ENCODE measurements at regions of chr4 and their contacts with region 1.

Region 1: GRCh38 chr4:183407128-183407585 is 37.3 kb upstream of the CDKN2AIP start:
- DNase-seq: peak; percentile 94
- H3K4me3 Mint-ChIP-seq: peak overlapping the region; percentile 66
- H3K27ac Mint-ChIP-seq: peak overlapping the region; percentile 59
- H3K4me1 Mint-ChIP-seq: peaks cover 13% of the 10 kb centered on the region
- H3K27me3 Mint-ChIP-seq: no peaks in the 10 kb centered on the region

Region 2: GRCh38 chr4:183074296-183074990 is 332.7 kb before region 1 on chr4:
- CTCF ChIA-PET with region 1: interaction called, 4 read pairs
- POLR2A ChIA-PET with region 1: no interaction called
- intact Hi-C with region 1: loop called (anchors 2 kb)
- DNase-seq: no peak
- H3K4me3 Mint-ChIP-seq: no peak overlapping the region
- H3K27ac Mint-ChIP-seq: no peak overlapping the region
- H3K4me1 Mint-ChIP-seq: no peaks in the 10 kb centered on the region
- H3K27me3 Mint-ChIP-seq: no peaks in the 10 kb centered on the region

Region 3: GRCh38 chr4:183396227-183396637 is 10.9 kb before region 1 on chr4:
- CTCF ChIA-PET with region 1: interaction called, 16 read pairs
- POLR2A ChIA-PET with region 1: interaction called, 3 read pairs
- intact Hi-C with region 1: no loop called
- DNase-seq: no peak
- H3K4me3 Mint-ChIP-seq: no peak overlapping the region
- H3K27ac Mint-ChIP-seq: no peak overlapping the region
- H3K4me1 Mint-ChIP-seq: peaks cover 18% of the 10 kb centered on the region
- H3K27me3 Mint-ChIP-seq: peaks cover 8% of the 10 kb centered on the region

Region 4: DNA sequence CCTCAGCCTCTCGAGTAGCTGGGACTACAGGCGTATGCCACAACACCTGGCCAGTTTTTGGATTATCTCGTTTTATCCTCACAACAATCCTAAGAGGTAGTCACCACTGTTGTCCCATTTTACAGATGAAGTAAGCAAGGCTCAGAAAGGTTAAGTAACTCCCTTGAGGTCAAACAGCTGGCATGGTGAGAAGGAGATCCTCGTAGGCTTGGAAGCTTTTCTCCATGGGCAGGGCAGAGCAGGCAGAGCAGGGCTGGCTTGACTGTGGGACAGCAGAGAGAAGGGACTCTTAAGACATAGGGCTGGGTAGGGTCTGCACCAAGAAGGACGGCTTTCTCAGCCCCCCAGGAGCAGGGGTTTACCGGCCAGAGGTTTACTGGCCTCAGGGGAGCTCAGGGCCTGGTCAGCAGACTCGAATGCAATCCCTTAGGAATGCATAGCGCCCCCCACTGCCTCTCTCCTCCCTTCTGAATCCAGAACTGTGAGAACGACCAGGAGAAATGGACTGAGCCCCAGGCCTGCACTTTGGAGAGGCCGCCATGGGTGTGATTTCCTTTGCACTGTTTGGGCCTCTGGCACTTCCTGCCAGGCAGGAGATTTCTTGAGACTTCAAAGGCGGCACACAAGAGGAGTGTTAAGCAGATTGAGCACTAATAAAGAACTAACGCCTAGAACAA is 23.3 kb after region 1 on chr4:
- CTCF ChIA-PET with region 1: interaction called, 9 read pairs
- POLR2A ChIA-PET with region 1: no interaction called
- intact Hi-C with region 1: loop called (anchors 2 kb)
- DNase-seq: peak; percentile 44
- H3K4me3 Mint-ChIP-seq: peak overlapping the region; percentile 31
- H3K27ac Mint-ChIP-seq: peak overlapping the region; percentile 81
- H3K4me1 Mint-ChIP-seq: peaks cover 38% of the 10 kb centered on the region
- H3K27me3 Mint-ChIP-seq: no peaks in the 10 kb centered on the region

Region 5: DNA sequence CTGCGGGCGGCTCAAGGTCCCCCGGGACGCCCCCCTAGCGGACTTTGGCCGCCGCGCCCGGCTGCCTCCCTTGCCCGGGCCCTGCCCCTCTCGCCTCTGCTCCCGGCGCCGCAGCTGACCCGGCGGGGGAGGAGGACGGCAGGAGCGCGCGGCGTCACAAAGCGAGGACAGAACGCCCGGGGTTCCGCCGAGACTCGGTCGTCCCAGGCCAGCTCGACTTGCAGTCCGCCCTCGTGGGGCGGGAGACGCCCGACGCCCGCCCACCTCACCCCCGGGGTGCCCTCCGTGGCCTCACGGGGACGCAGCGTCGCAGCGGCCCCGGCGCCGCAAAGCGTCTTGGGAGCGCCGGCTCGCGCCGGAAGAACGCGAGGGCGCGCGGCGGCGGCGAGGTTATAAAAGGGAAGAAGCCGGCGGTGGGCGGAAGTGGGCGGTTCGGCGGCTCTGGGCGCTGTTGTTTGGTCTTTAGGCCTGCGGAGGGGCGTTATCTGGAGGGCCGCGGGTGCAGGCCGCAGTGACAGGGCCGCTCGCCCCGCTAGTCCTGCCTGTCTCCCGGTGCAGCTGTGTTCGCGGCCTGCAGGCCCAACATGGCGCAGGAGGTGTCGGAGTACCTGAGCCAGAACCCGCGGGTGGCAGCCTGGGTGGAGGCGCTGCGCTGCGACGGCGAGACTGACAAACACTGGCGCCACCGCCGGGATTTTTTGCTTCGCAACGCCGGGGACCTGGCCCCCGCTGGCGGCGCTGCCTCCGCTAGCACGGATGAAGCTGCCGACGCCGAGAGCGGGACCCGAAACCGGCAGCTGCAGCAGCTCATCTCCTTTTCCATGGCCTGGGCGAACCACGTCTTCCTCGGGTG is 37.3 kb after region 1 on chr4 and contains the start of gene CDKN2AIP:
- CTCF ChIA-PET with region 1: interaction called, 16 read pairs
- POLR2A ChIA-PET with region 1: interaction called, 7 read pairs
- intact Hi-C with region 1: loop called (anchors 1 kb)
- DNase-seq: peak; percentile 95
- H3K4me3 Mint-ChIP-seq: peak within 1 kb of the TSS; percentile 96
- H3K27ac Mint-ChIP-seq: peak within 1 kb of the TSS; percentile 98
- H3K4me1 Mint-ChIP-seq: peaks cover 41% of the 10 kb centered on the region
- H3K27me3 Mint-ChIP-seq: no peaks in the 10 kb centered on the region
- total RNA-seq, gene CDKN2AIP: 23.0 to 23.7 TPM

Region 6: DNA sequence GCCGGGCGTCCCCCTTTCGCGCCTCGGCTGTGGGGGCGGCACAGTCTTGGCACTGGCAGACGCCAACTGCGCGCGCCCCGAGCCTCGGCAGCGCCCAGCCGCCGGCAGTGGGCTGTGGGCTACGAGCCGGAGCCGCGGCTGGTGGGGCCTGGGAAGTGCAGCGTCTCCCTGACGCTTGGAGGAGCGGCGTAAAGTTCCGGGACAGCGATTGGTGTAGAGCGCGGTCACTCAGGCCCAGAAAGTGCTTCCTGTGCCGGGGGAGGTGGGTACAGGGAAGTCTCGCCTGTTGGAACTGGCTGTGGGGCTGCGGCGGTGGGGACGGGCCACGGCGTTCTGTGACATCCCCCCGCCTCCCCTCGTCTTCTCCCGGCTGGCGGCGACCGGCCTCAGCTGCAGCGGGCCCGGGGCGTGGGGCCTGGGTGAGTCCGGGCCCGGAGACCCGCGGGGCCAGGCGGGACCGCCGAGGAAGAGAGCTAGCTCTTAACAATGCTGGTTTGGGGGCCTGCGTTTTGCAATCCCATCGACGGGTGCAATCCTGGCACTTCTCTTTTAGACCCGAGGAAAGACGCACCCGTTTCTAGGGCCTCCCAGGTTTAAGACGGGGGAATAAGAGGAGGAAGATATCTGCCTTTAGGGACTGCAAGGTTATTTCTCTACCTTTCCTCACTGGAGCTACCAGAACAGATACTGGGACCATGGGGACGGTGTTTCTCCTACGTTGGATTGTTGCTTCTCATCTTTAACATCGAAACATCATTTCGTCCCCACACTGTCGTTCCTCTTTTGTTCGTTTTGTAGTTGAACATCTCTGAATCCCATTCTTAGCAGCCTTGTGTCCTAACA is 252.1 kb after region 1 on chr4 and contains the starts of genes RWDD4 and TRAPPC11:
- CTCF ChIA-PET with region 1: no interaction called
- POLR2A ChIA-PET with region 1: no interaction called
- intact Hi-C with region 1: loop called (anchors 1 kb)
- DNase-seq: peak; percentile 98
- H3K4me3 Mint-ChIP-seq: peak within 1 kb of the TSS; percentile 85
- H3K27ac Mint-ChIP-seq: peak within 1 kb of the TSS; percentile 80
- H3K4me1 Mint-ChIP-seq: peaks cover 35% of the 10 kb centered on the region
- H3K27me3 Mint-ChIP-seq: no peaks in the 10 kb centered on the region
- total RNA-seq, gene RWDD4: 19.4 to 19.8 TPM
- total RNA-seq, gene TRAPPC11: 29.7 to 30.2 TPM